PC-3 (cell line): ENCODE measurements at regions of chr20 and their contacts with region 1.

Region 1: GRCh38 chr20:14790771-14791620 is 453.6 kb upstream of the FLRT3 start:
- DNase-seq: no peak
- ATAC-seq: no peak
- H3K4me3 ChIP-seq: no peak overlapping the region
- H3K27ac ChIP-seq: no peak overlapping the region
- H3K4me1 ChIP-seq: no peaks in the 10 kb centered on the region
- H3K27me3 ChIP-seq: no peaks in the 10 kb centered on the region
- CTCF ChIP-seq: no peak

Region 2: GRCh38 chr20:14521016-14521415 is 270.0 kb before region 1 on chr20:
- CTCF ChIA-PET with region 1: interaction called, 11 read pairs
- POLR2A ChIA-PET with region 1: no interaction called
- intact Hi-C with region 1: no loop called
- DNase-seq: no peak
- ATAC-seq: no peak
- H3K4me3 ChIP-seq: no peak overlapping the region
- H3K27ac ChIP-seq: no peak overlapping the region
- H3K4me1 ChIP-seq: peaks cover 16% of the 10 kb centered on the region
- H3K27me3 ChIP-seq: no peaks in the 10 kb centered on the region
- CTCF ChIP-seq: no peak

Region 3: GRCh38 chr20:14622796-14623195 is 168.2 kb before region 1 on chr20:
- CTCF ChIA-PET with region 1: no interaction called
- POLR2A ChIA-PET with region 1: no interaction called
- intact Hi-C with region 1: no loop called
- DNase-seq: peak; percentile 83
- ATAC-seq: peak; percentile 93
- H3K4me3 ChIP-seq: no peak overlapping the region
- H3K27ac ChIP-seq: no peak overlapping the region
- H3K4me1 ChIP-seq: peaks cover 4% of the 10 kb centered on the region; the same call in 1 of the 2 replicates
- H3K27me3 ChIP-seq: no peaks in the 10 kb centered on the region
- CTCF ChIP-seq: peak; percentile 61